Heart left ventricle (tissue), 16 donors: ENCODE measurements at regions of chr18 and their contacts with region 1.

Region 1: GRCh38 chr18:77207540-77207939 is 42.1 kb upstream of the GALR1 start:
- DNase-seq: peak; percentile 46 to 74 (median 49)
- ATAC-seq: peak in 3 of 4 donors; percentile 52 to 66 (median 62)
- H3K4me3 ChIP-seq: no peak overlapping the region
- H3K27ac ChIP-seq: peak overlapping the region in 8 of 12 donors; percentile 4 to 91 (median 31)
- H3K4me1 ChIP-seq: peaks cover 0 to 53% (median 14%) of the 10 kb centered on the region in 12 donors
- H3K27me3 ChIP-seq: no peaks in the 10 kb centered on the region
- CTCF ChIP-seq: peak in 11 of 12 donors; percentile 31 to 63 (median 47)
- POLR2A ChIP-seq: no peak

Region 2: GRCh38 chr18:76771192-76771799 is 436.2 kb before region 1 on chr18:
- intact Hi-C with region 1: no loop called
- DNase-seq: no peak
- ATAC-seq: no peak
- H3K4me3 ChIP-seq: no peak overlapping the region
- H3K27ac ChIP-seq: no peak overlapping the region
- H3K4me1 ChIP-seq: no peaks in the 10 kb centered on the region
- H3K27me3 ChIP-seq: peaks cover 0 to 17% (median 0%) of the 10 kb centered on the region in 9 donors
- CTCF ChIP-seq: no peak
- POLR2A ChIP-seq: no peak

Region 3: DNA sequence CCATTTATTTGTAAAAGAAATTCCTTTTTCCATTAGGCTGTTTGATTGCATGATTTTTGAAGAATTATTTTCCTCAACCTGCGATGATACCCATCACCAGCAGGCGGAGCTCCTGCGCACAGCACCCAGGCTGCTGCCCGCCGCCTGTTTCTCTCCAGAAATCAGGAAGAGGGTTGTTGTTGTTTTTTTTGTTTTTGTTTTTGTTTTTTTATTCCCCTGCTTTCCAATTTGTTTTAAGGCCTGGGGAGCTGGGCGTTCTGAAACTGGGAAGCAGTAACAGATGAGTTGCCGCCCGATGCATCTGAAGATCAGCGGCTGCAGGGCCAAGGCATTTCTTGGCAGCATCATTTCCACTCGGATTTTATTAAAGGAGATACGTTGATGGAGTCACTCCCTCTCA is 207.0 kb before region 1 on chr18:
- intact Hi-C with region 1: loop called (anchors 1 to 5 kb)
- DNase-seq: peak in 3 of 5 donors; percentile 50 to 64 (median 52)
- ATAC-seq: no peak
- H3K4me3 ChIP-seq: peak overlapping the region in 7 of 12 donors; percentile 6 to 49 (median 29)
- H3K27ac ChIP-seq: peak overlapping the region in 2 of 12 donors; percentile 27 to 35
- H3K4me1 ChIP-seq: peaks cover 0 to 29% (median 0%) of the 10 kb centered on the region in 12 donors
- H3K27me3 ChIP-seq: no peaks in the 10 kb centered on the region
- CTCF ChIP-seq: peak; percentile 87 to 99 (median 96)
- POLR2A ChIP-seq: no peak

Region 4: DNA sequence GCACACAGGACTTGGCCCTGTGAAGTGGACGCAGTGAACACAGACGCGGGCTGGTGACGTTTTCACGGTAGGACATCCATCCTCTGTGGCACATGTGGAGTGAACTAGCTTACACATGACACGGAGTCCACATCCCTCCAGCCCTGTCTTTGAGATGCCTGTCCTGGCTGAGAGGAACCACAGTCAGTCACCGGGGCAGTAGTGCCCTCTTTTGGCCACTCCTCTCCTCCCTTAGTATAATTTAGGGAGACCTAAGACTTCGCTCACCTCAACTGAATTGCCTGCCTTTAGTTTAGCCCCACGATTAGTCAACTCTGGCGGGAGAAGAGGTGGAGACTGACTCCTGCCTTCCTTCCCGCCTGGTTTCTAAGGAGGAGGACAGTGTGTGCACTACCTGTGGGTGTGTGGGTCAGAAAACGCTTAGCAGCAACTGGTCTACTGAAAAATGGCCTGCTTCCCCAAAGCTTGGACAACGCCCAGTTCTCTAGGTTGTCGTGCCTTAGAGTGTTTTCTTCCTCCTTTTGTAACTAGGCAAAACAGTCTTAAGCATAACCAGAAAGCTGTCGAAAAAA is 145.5 kb before region 1 on chr18:
- intact Hi-C with region 1: loop called in 5 of 10 experiments (anchors 5 to 10 kb)
- DNase-seq: no peak
- ATAC-seq: peak in 3 of 4 donors; percentile 15 to 47 (median 43)
- H3K4me3 ChIP-seq: no peak overlapping the region
- H3K27ac ChIP-seq: peak overlapping the region in 8 of 12 donors; percentile 10 to 88 (median 54)
- H3K4me1 ChIP-seq: peaks cover 0 to 94% (median 26%) of the 10 kb centered on the region in 12 donors
- H3K27me3 ChIP-seq: no peaks in the 10 kb centered on the region
- CTCF ChIP-seq: peak in 5 of 12 donors; percentile 11 to 38 (median 17)
- POLR2A ChIP-seq: no peak

Region 5: DNA sequence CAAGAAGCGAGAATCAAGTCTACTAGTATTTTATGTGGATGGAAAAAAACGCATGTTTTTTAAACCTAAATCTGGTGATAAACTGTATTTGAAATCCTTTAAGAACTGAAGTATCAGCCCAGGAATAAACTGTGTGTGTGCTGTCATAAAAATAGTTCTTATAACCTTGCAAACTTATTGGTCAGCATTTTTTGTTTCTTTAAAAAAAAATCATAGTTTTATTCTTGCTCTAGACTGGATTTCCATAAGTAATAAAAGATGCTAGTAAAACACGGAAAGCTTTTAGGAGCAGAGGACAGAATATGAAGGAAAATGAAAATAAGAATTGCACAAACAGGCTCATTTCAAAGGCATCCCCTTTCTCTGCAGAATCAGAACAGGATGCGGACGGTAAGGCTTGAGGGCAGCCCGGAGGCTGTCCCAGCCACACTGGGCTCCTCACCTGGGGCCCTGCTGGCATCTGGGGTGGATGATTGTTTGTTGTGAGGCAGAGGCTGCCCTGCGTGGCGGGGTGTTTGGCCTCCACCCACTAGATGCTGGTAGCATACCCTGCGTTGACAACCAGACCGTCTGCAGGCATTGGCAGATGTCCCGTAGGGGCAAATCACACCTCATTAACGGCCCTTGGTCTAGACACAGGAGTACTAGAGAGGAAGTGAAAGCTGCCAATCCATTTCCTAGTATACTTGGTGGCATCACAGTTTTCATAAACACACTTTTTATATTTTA is 127.4 kb before region 1 on chr18:
- intact Hi-C with region 1: loop called in 1 of 10 experiments (anchors 10 kb)
- DNase-seq: peak in 1 of 5 donors; percentile 58
- ATAC-seq: peak in 3 of 4 donors; percentile 40 to 47 (median 42)
- H3K4me3 ChIP-seq: no peak overlapping the region
- H3K27ac ChIP-seq: peak overlapping the region in 7 of 12 donors; percentile 2 to 79 (median 41)
- H3K4me1 ChIP-seq: peaks cover 0 to 69% (median 34%) of the 10 kb centered on the region in 12 donors
- H3K27me3 ChIP-seq: no peaks in the 10 kb centered on the region
- CTCF ChIP-seq: no peak
- POLR2A ChIP-seq: no peak

Region 6: DNA sequence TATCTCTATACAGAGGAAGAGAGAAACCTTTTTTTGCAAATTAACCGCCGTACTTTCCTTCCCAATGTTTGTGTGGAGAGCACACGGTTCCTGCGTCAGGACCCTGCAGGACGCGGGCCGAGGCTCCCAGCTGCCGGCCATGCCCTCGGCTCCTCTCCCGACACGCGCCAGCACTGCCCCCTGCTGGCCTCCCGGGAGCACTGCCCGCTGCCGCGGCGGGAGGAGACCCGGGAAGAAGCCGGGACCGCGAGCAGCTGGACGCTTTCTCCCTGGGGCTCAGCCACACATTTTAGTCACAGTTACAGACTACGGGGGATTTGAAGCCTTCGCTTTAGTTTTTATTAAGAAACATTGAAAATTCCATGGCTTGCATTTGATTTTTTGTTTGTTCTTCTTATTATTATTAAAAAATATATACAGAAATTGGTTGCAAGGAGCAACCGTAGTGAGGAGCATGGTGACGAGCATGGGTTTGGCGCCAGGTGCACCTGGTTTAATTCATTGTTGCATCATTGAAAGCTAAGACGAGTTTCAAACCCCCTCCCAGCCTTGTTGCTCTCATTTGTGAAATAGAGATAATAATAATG is 443.4 kb after region 1 on chr18:
- intact Hi-C with region 1: loop called in 2 of 10 experiments (anchors 5 to 10 kb)
- DNase-seq: peak; percentile 71 to 89 (median 74)
- ATAC-seq: peak; percentile 65 to 98 (median 91)
- H3K4me3 ChIP-seq: peak overlapping the region in 1 of 12 donors; percentile 2
- H3K27ac ChIP-seq: no peak overlapping the region
- H3K4me1 ChIP-seq: peaks cover 0 to 8% (median 0%) of the 10 kb centered on the region in 12 donors
- H3K27me3 ChIP-seq: peaks cover 0 to 18% (median 4%) of the 10 kb centered on the region in 9 donors
- CTCF ChIP-seq: peak; percentile 75 to 95 (median 88)
- POLR2A ChIP-seq: no peak